Testis (tissue), 5 donors: ENCODE measurements at regions of chr2 and their contacts with region 1.

Region 1: GRCh38 chr2:236569573-236569973 is at the start of gene ACKR3:
- DNase-seq: peak; percentile 92
- H3K4me3 ChIP-seq: peak within 1 kb of the TSS; percentile 47 to 63
- H3K27ac ChIP-seq: peak within 1 kb of the TSS; percentile 81 to 84
- H3K4me1 ChIP-seq: peaks cover 43% of the 10 kb centered on the region
- H3K27me3 ChIP-seq: no peaks in the 10 kb centered on the region
- CTCF ChIP-seq: peak; percentile 16 to 50 (median 19)
- POLR2A ChIP-seq: peak; percentile 13
- total RNA-seq, gene ACKR3: 22.8 to 35.5 TPM

Region 2: GRCh38 chr2:236512902-236513435 is 56.6 kb before region 1 on chr2:
- intact Hi-C with region 1: loop called (anchors 10 kb)
- DNase-seq: peak; percentile 77
- H3K4me3 ChIP-seq: no peak overlapping the region
- H3K27ac ChIP-seq: no peak overlapping the region
- H3K4me1 ChIP-seq: no peaks in the 10 kb centered on the region
- H3K27me3 ChIP-seq: no peaks in the 10 kb centered on the region
- CTCF ChIP-seq: peak; percentile 67 to 85 (median 81)
- POLR2A ChIP-seq: no peak

Region 3: DNA sequence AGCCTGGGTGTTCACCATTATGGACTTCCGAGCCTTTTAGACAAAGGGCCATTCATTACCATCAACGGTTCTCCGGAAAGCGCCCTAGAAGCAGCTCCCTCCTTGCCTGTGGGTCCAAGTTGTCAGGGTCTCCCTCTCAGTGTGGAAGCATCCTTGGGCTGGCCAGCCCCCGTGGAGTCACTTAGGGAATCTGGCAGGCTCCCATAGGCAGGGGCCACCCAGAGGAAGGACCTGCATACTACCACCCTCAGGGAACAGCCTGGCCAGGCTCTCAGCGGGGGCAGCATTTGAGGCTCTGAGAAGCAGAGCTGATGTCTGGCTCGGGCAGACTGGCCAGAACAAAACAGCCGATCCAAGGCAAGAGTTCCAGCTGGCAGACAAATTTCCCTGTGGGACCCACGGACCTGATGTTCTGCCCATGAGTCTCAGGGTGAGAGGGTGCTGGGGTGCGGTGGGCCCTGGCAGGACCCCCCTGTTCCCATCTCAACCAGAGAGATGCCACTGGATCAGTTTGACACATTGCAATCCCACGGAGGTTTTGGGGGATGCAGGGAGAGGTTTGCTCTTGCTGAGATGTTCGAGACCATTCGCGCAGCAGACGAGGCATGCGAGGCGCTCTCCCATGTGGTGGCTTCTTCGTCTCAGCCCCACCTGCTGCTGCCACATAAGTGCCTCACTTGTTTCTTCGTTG is 57.0 kb after region 1 on chr2:
- intact Hi-C with region 1: no loop called
- DNase-seq: no peak
- H3K4me3 ChIP-seq: no peak overlapping the region
- H3K27ac ChIP-seq: no peak overlapping the region
- H3K4me1 ChIP-seq: peaks cover 10% of the 10 kb centered on the region
- H3K27me3 ChIP-seq: no peaks in the 10 kb centered on the region
- CTCF ChIP-seq: no peak
- POLR2A ChIP-seq: no peak